ENCODE measurements at regions of chr6 and their contacts with region 1.

Region 1: DNA sequence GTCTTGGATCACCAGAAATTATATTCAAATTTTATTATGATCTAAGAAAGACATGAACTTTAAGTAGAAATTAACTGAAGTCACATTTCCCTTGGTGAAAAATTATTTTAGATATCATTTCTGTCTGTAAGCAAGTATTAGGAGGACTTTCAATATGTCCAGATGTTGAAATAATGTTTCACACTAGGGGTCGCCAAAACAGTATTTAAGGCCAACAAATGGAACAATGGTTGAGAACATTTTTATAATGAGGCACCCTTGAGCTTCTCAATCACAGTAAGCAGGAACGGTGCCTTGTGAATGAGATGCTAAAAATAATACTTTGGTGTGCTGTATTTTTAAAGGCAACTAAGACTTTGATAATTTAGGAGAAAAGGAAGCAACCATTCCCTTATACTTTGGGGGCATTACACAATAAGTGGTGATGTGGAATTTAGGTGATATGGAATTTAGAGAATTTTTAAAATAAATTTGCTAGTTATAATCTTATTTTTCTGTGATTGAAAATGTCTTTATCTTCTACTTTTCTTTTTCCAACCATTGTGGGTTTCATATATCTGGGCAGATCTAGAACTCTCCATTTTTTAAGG is 9.6 kb upstream of the SF3B5 start:
- DNase-seq: no peak
- ATAC-seq: peak; percentile 85 to 97 (median 86)
- H3K4me3 ChIP-seq: no peak overlapping the region
- H3K27ac ChIP-seq: no peak overlapping the region
- H3K4me1 ChIP-seq: no peaks in the 10 kb centered on the region
- H3K27me3 ChIP-seq: no peaks in the 10 kb centered on the region
- CTCF ChIP-seq: peak; percentile 66 to 79 (median 69)
- POLR2A ChIP-seq: no peak

Region 2: GRCh38 chr6:144215932-144216667 is 111.1 kb after region 1 on chr6:
- intact Hi-C with region 1: loop called in 1 of 2 experiments (anchors 5 kb)
- DNase-seq: peak; percentile 92 to 94 (median 94)
- ATAC-seq: peak; percentile 89 to 94 (median 92)
- H3K4me3 ChIP-seq: peak overlapping the region; percentile 61 to 76 (median 62)
- H3K27ac ChIP-seq: peak overlapping the region; percentile 95 to 99 (median 99)
- H3K4me1 ChIP-seq: peaks cover 0 to 14% (median 2%) of the 10 kb centered on the region in 4 donors
- H3K27me3 ChIP-seq: no peaks in the 10 kb centered on the region
- CTCF ChIP-seq: peak; percentile 56 to 89 (median 62)
- POLR2A ChIP-seq: peak; percentile 37

Region 3: GRCh38 chr6:144232176-144232831 is 127.3 kb after region 1 on chr6:
- intact Hi-C with region 1: loop called in 1 of 2 experiments (anchors 10 kb)
- DNase-seq: no peak
- ATAC-seq: no peak
- H3K4me3 ChIP-seq: no peak overlapping the region
- H3K27ac ChIP-seq: no peak overlapping the region
- H3K4me1 ChIP-seq: no peaks in the 10 kb centered on the region
- H3K27me3 ChIP-seq: no peaks in the 10 kb centered on the region
- CTCF ChIP-seq: no peak
- POLR2A ChIP-seq: no peak

Region 4: DNA sequence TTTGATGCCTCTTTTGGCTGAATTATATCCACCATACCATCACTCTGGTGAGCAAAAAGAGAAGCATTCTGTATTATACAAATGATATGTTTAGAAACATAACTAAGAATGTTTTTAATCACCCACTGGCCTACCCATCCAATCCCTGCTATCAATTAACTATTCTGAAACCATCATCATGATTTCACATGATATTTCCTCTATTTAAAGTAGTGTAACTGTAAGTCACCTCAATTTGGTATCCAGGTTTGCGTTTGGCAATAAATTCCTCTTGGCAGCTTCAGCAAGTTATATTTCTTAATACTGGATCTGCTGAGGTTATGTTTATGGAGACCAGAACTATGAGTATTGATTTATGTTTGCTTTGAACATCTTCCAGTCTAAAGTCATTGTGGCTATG is 512.2 kb after region 1 on chr6:
- intact Hi-C with region 1: no loop called
- DNase-seq: no peak
- ATAC-seq: peak in 1 of 4 donors; percentile 27
- H3K4me3 ChIP-seq: no peak overlapping the region
- H3K27ac ChIP-seq: no peak overlapping the region
- H3K4me1 ChIP-seq: no peaks in the 10 kb centered on the region
- H3K27me3 ChIP-seq: no peaks in the 10 kb centered on the region
- CTCF ChIP-seq: no peak
- POLR2A ChIP-seq: no peak

Measured in right lobe of liver (tissue), 6 donors.